Heart left ventricle (tissue), 16 donors: ENCODE measurements at regions of chr4 and their contacts with region 1.

Region 1: DNA sequence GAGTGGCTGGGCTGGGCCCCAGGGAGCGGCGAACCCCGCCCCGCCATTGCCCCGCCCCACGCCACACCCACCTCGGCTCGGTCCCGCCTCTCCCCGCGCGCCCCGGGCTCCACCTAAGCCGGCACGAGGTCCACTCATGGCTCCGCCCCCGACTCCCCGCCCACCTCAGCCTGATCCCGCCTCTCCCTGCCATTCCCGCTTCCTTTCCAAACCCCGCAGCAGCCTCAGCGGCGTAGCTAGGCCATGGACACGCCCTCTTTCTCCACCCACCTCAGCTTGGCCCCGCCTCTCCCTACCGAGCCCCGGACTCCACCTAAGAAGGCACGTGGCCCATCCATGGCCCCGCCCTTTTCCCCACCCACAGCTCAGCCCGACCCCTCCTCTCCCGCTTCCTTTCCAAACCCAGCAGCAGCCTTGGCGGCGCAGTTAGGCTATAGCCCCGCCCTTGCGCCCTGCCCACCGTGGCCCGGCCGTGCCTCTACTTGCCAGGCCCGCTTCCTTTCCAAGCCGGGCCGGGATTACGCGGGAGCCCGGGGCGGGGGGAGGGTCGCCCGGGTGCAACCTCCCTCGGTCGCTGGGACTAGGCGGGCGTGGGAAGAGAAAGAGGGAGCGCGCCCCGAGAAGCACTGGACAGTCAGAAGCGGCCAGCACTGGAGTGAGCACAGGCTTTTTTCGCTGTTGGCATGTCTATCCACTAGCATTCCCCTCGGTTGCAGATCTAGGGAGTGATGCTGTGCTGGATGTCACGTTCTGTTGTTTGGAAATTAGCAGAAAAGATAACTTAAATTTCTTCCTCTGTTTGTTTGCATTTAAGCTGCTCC is at the start of gene RELL1:
- DNase-seq: peak; percentile 99 to 100 (median 100)
- ATAC-seq: peak; percentile 97 to 98 (median 98)
- H3K4me3 ChIP-seq: peak within 1 kb of the TSS; percentile 65 to 99 (median 92)
- H3K27ac ChIP-seq: peak within 1 kb of the TSS; percentile 75 to 98 (median 96)
- H3K4me1 ChIP-seq: peaks cover 0 to 46% (median 24%) of the 10 kb centered on the region in 12 donors
- H3K27me3 ChIP-seq: no peaks in the 10 kb centered on the region
- CTCF ChIP-seq: no peak
- POLR2A ChIP-seq: peak in 1 of 2 donors; percentile 12
- total RNA-seq, gene RELL1: 17.1 to 40.2 (median 28.5) TPM

Region 2: GRCh38 chr4:37603070-37603468 is 83.5 kb before region 1 on chr4:
- intact Hi-C with region 1: loop called (anchors 5 to 10 kb)
- DNase-seq: peak; percentile 80 to 92 (median 82)
- ATAC-seq: peak; percentile 89 to 96 (median 96)
- H3K4me3 ChIP-seq: no peak overlapping the region
- H3K27ac ChIP-seq: no peak overlapping the region
- H3K4me1 ChIP-seq: peaks cover 0 to 19% (median 0%) of the 10 kb centered on the region in 12 donors
- H3K27me3 ChIP-seq: no peaks in the 10 kb centered on the region
- CTCF ChIP-seq: peak; percentile 97 to 99 (median 98)
- POLR2A ChIP-seq: no peak

Region 3: DNA sequence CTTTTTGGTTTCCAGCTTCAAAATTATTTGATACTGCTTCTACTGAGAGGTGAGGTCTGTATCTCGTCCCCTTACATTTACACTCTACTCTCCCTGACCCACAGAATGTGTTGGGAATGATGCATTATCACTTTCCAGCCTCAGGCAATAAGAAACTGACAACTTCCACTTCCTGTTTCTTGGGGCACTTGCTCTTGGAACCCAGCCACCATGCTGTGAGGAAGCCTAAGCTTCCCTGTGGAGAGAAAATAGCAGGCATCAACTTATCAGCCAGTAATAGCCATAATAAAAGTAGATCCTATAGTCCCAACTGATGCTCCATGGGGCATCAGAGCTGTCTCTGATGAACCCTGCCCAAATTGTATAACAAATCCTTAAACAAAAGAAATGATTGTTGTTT is 33.0 kb before region 1 on chr4:
- intact Hi-C with region 1: loop called in 2 of 10 experiments (anchors 5 kb)
- DNase-seq: no peak
- ATAC-seq: no peak
- H3K4me3 ChIP-seq: no peak overlapping the region
- H3K27ac ChIP-seq: no peak overlapping the region
- H3K4me1 ChIP-seq: peaks cover 0 to 18% (median 4%) of the 10 kb centered on the region in 12 donors
- H3K27me3 ChIP-seq: no peaks in the 10 kb centered on the region
- CTCF ChIP-seq: no peak
- POLR2A ChIP-seq: no peak

Region 4: DNA sequence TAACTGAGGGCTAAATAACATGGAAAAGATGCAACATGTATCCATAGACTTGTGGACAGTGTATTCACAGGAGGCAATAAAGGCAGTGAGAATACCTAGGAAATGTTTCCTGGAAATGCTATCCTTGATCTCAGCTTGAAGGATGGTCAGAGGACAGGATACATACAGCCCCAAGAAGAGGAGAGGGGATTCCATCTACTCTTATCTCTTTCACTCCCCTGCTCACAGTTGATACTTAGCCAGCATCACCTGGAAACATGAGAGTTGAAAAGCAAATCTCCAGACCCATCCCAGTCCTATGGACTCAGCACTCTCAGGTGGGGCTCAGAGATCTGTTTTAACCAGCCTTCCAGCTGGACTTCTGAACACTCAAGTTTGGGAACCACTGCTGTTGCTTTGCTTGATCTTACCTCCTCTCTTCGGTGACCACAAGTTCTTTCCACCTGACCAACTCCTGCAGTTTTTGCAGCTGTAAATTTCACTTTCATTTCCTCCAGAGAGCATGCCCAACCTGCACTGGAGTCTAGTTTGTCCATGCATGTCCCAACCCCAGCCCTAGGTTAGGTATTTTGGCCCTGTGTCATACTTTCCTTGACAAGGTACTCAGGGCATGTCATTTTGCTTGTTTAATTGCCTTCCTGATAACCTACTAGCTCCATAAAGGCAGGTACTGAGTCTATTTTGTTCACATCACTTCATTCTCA is 10.8 kb before region 1 on chr4:
- intact Hi-C with region 1: no loop called
- DNase-seq: no peak
- ATAC-seq: no peak
- H3K4me3 ChIP-seq: no peak overlapping the region
- H3K27ac ChIP-seq: peak overlapping the region in 1 of 12 donors; percentile 39
- H3K4me1 ChIP-seq: peaks cover 0 to 69% (median 42%) of the 10 kb centered on the region in 12 donors
- H3K27me3 ChIP-seq: no peaks in the 10 kb centered on the region
- CTCF ChIP-seq: no peak
- POLR2A ChIP-seq: no peak

Region 5: DNA sequence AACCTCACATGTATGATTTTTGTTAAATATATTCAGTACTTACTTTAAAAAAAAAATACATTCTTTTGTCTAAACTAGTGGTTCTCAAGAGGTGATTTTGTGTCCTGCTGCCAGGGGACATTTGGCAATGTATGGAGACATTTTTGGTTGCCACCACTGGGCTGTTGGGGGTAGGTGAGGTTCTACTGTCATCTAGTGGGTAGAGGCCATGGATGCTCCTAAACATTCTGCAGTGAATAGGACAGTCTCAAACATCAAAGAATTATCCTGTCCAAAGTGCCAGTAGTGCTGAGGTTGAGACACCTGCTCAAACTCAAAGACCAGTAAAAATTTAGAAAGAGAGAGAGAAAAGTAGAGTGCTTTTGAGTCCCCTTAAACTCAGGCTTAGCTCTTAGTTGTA is 107.0 kb after region 1 on chr4:
- intact Hi-C with region 1: loop called in 2 of 10 experiments (anchors 5 to 10 kb)
- DNase-seq: peak in 1 of 5 donors; percentile 18
- ATAC-seq: peak; percentile 86 to 90 (median 86)
- H3K4me3 ChIP-seq: no peak overlapping the region
- H3K27ac ChIP-seq: no peak overlapping the region
- H3K4me1 ChIP-seq: peaks cover 0 to 6% (median 0%) of the 10 kb centered on the region in 12 donors
- H3K27me3 ChIP-seq: peaks cover 0 to 2% (median 0%) of the 10 kb centered on the region in 9 donors
- CTCF ChIP-seq: peak; percentile 36 to 78 (median 66)
- POLR2A ChIP-seq: no peak

Region 6: DNA sequence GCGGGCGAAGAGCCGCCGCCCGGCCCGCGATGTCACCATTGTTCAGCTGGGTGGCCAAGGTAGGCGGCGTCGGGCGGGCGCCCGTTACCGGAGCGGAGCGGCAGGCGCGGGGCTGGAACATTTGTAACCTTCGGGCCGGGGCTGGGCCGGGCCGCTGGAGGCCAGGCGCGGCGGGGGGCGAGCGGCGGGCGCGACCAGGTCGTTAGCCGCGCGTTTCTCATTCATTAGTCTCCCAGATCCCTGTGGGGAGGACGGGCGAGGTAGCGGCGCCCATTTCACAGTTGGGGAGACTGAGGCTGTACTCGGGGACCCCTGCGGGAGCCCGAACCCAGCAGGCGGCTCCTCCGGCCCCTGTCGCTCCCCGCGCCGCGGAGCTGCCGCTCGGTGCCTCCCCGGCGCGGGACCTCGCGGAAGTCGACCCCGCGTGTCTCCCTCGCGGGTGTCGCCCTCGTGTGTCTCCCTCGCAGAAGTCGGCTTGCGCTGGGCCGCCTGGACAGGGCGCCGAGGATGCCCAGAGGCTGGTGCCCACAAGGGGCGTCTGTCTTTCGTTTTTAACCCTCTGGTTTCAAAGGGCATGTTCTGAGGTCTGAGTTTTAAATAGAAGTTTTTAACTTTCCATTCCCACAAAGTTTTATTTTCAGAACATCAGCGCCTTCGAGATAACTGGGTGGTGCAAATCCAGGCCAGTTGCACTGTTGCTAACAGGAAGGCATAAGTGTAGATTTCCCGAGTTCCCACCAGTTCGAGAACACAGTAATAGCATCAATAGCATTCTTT is 291.1 kb after region 1 on chr4:
- intact Hi-C with region 1: loop called in 1 of 10 experiments (anchors 10 kb)
- DNase-seq: peak; percentile 78 to 89 (median 85)
- ATAC-seq: peak; percentile 72 to 88 (median 85)
- H3K4me3 ChIP-seq: peak overlapping the region; percentile 82 to 97 (median 92)
- H3K27ac ChIP-seq: peak overlapping the region; percentile 91 to 99 (median 98)
- H3K4me1 ChIP-seq: peaks cover 0 to 60% (median 32%) of the 10 kb centered on the region in 12 donors
- H3K27me3 ChIP-seq: no peaks in the 10 kb centered on the region
- CTCF ChIP-seq: peak; percentile 57 to 88 (median 72)
- POLR2A ChIP-seq: no peak

Region 7: DNA sequence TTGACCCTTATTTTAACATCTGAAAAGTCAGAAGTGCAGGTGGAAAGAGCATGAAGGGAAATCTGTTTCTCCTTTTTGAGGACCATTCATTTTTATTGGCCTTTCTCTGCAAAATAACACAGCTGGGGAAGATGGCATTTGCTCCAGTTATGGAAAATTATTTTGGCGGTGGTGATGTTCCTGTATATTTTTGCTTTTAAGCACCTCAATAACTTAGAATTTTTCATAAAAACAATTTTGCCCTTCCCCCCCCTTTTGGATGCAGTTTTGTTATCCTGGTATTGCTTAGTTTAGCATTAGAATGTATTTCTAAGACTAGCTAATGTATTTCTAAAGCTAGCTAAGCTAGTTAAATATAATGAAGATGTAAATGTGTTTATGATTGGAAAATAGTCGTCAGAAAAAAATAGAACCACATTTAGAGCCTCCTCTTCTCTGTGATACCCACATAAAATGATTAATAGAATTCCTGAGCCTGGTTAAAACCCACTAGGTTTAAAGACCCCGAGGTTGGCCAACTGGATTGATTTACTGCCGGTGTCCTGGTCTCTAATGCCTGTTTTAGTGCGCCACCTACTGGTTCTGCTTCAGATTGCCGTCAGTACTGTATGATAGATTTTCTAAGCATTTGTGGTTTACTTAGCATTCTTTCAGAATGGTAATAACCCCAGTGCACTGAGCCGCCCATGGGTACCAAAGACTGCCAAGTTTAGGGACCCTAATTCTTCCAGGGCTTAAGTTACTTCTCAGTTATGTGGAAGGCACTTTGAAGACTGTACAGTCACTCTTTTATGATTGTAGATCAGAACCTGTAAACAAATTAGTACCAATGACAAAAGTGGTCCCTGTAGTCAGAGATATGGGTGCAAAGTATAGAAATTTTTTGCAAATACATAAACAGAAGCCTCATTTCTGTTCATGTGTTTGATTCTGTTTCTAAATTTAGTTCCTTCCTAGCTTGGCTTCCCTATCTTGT is 988.9 kb after region 1 on chr4:
- intact Hi-C with region 1: loop called in 1 of 10 experiments (anchors 10 kb)
- DNase-seq: peak in 4 of 5 donors; percentile 68 to 78 (median 76)
- ATAC-seq: peak in 3 of 4 donors; percentile 40 to 45 (median 42)
- H3K4me3 ChIP-seq: peak overlapping the region in 4 of 12 donors; percentile 2 to 42 (median 18)
- H3K27ac ChIP-seq: peak overlapping the region in 10 of 12 donors; percentile 97 to 100 (median 99)
- H3K4me1 ChIP-seq: peaks cover 30 to 91% (median 81%) of the 10 kb centered on the region in 12 donors
- H3K27me3 ChIP-seq: no peaks in the 10 kb centered on the region
- CTCF ChIP-seq: peak; percentile 84 to 97 (median 92)
- POLR2A ChIP-seq: no peak